ENCODE measurements at regions of chr12 and their contacts with region 1.

Region 1: DNA sequence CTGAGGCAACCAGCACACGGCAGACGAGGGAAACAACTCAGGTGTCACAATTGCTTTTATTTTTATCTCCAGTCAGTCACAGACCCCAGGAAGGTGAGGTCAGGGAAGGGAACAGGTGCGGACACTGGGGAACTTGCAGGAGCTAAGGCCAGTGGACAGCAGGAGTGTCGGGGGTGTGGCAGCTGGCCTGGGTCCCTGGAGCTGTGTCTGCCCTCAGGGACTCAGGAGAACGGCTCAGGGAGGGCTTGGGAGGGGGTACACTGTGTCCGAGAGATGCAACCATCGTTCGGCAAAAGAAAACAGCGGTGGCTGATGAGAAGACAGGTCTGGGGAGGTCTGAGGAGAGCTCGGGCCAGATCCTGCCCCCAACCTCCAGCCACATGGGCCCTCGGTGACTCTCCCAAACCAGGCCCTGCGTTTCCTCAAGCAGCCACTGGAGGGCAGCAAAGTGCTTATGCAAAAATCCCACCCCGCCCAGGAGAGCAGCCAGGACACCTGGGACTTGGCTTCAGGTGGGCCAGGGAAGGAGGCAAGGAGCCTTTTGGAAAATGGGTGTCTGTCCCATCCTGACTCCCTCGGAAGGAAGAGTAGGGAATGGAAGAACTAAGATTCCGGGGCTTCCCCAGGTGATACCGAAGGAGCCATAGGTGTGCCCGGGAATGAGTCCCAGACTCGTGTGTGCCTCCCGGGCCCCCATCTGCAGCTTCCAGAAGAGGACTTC is 24.1 kb upstream of the BCDIN3D start:
- DNase-seq: peak; percentile 42
- H3K4me3 ChIP-seq: no peak overlapping the region
- H3K27ac ChIP-seq: no peak overlapping the region
- H3K4me1 ChIP-seq: peaks cover 20% of the 10 kb centered on the region
- H3K27me3 ChIP-seq: peaks cover 2 to 7% of the 10 kb centered on the region in 2 experiments
- CTCF ChIP-seq: peak; percentile 91 to 97
- POLR2A ChIP-seq: no peak

Region 2: DNA sequence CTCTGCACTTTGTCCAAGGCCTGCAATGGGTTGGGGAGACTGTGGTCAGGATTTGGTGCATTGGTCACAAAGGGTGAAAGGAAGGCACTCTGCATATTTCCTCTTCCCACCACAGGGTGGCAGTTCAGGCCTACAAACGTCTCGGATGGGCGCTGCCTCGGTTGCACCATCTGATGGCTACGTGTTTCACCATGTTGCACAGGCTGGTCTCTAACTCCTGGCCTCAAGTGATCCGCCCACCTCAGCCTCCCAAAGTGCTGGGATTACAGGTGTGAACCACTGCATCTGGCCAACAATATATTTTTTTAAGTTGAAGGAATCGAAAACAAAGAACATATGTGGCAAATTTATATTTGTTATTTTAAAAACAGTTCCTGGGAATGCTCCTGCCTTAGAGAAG is 90.6 kb before region 1 on chr12:
- CTCF ChIA-PET with region 1: interaction called, 7 read pairs
- POLR2A ChIA-PET with region 1: no interaction called
- dilution Hi-C with region 1: no loop called
- intact Hi-C with region 1: loop called (anchors 1 kb)
- DNase-seq: peak; percentile 68
- H3K4me3 ChIP-seq: no peak overlapping the region
- H3K27ac ChIP-seq: no peak overlapping the region
- H3K4me1 ChIP-seq: no peaks in the 10 kb centered on the region
- H3K27me3 ChIP-seq: peaks cover 0 to 2% of the 10 kb centered on the region in 2 experiments
- CTCF ChIP-seq: peak; percentile 77 to 79
- POLR2A ChIP-seq: no peak

Region 3: GRCh38 chr12:49920241-49920921 is 53.4 kb after region 1 on chr12:
- CTCF ChIA-PET with region 1: interaction called, 10 read pairs
- POLR2A ChIA-PET with region 1: no interaction called
- dilution Hi-C with region 1: no loop called
- intact Hi-C with region 1: loop called (anchors 1 kb)
- DNase-seq: peak; percentile 65
- H3K4me3 ChIP-seq: no peak overlapping the region
- H3K27ac ChIP-seq: peak overlapping the region; percentile 2
- H3K4me1 ChIP-seq: peaks cover 16% of the 10 kb centered on the region
- H3K27me3 ChIP-seq: no peaks in the 10 kb centered on the region
- CTCF ChIP-seq: peak in 1 of 2 donors; percentile 9
- POLR2A ChIP-seq: no peak

Region 4: GRCh38 chr12:49959570-49960465 is 92.8 kb after region 1 on chr12:
- CTCF ChIA-PET with region 1: interaction called, 183 read pairs
- POLR2A ChIA-PET with region 1: interaction called, 11 read pairs
- dilution Hi-C with region 1: no loop called
- intact Hi-C with region 1: loop called (anchors 1 kb)
- DNase-seq: peak; percentile 88
- H3K4me3 ChIP-seq: no peak overlapping the region
- H3K27ac ChIP-seq: peak overlapping the region; percentile 69
- H3K4me1 ChIP-seq: peaks cover 30% of the 10 kb centered on the region
- H3K27me3 ChIP-seq: no peaks in the 10 kb centered on the region
- CTCF ChIP-seq: no peak
- POLR2A ChIP-seq: peak; percentile 34